Panc1 (cell line): ENCODE measurements at regions of chr15 and their contacts with region 1.

Region 1: GRCh38 chr15:59917504-59918157 is 86.5 kb upstream of the FOXB1 start:
- DNase-seq: peak; percentile 25
- ATAC-seq: peak; percentile 99
- H3K4me3 ChIP-seq: no peak overlapping the region
- H3K27ac ChIP-seq: no peak overlapping the region
- H3K4me1 ChIP-seq: no peaks in the 10 kb centered on the region
- H3K27me3 ChIP-seq: no peaks in the 10 kb centered on the region
- CTCF ChIP-seq: peak; percentile 78

Region 2: DNA sequence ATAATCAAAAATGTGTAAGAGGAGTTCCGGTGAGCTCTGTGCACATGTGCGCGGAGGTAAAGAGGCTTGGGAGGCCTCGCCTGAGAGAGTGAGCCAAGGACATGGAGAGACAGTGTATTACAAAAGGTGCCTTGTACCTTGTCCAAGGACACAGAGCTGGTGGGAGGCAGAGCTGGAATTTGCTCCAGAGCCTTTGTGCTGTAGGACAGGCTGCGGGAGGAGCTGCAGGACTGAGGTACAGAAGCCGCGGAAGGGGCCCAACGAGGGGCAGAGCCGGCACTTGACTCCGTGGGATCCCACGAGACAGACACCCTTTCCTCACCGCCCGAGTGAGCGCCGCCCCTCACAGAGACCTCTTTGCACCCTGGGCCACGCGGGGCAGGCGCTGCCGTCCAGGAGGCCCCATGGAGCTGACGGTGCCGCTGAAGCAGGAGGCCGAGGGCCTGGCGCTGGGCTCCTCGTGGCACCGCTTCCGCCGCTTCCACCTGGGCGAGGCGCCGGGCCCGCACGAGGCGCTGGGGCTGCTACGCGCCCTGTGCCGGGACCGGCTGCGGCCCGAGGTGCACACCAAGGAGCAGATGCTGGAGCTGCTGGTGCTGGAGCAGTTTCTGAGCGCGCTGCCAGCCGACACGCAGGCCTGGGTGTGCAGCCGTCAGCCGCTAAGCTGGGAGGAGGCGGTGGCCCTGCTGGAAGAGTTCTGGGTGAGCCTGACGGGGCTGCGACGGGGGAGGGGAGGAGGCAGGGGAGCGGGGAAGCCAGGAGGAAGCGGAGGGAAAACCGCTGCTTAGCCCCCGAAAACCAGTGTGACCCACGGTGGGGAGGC is 1052.8 kb before region 1 on chr15:
- CTCF ChIA-PET with region 1: no interaction called
- POLR2A ChIA-PET with region 1: no interaction called
- in situ Hi-C with region 1: no loop called
- intact Hi-C with region 1: no loop called
- DNase-seq: no peak
- ATAC-seq: 0 out of 2 replicates have a peak, but pooled peaks have one; percentile 44
- H3K4me3 ChIP-seq: no peak overlapping the region
- H3K27ac ChIP-seq: no peak overlapping the region
- H3K4me1 ChIP-seq: no peaks in the 10 kb centered on the region
- H3K27me3 ChIP-seq: no peaks in the 10 kb centered on the region
- CTCF ChIP-seq: no peak

Region 3: DNA sequence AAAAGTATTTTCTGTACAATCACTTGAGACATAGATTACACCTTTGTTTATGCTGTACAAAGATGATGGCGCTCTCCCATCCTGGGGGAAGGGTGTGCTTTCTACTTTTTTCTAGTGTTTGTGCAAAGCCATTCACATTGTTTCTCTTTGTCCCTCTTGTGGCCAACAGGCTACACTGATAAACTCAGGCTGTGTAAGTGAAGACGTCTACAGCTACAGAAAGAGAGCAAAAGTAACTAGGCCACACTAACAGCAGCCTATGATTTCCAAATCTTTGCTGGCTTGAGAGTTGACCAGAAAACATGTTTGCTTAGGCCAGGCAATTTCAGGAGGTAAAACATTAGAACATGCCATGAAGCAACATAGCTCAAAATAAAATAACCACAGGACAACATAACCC is 161.6 kb after region 1 on chr15:
- CTCF ChIA-PET with region 1: interaction called, 3 read pairs
- POLR2A ChIA-PET with region 1: no interaction called
- in situ Hi-C with region 1: no loop called
- intact Hi-C with region 1: loop called (anchors 10 kb)
- DNase-seq: no peak
- ATAC-seq: peak; percentile 87; the same call in 1 of the 2 replicates
- H3K4me3 ChIP-seq: no peak overlapping the region
- H3K27ac ChIP-seq: no peak overlapping the region
- H3K4me1 ChIP-seq: peaks cover 3% of the 10 kb centered on the region; the same call in 1 of the 2 replicates
- H3K27me3 ChIP-seq: no peaks in the 10 kb centered on the region
- CTCF ChIP-seq: peak; percentile 61

Region 4: DNA sequence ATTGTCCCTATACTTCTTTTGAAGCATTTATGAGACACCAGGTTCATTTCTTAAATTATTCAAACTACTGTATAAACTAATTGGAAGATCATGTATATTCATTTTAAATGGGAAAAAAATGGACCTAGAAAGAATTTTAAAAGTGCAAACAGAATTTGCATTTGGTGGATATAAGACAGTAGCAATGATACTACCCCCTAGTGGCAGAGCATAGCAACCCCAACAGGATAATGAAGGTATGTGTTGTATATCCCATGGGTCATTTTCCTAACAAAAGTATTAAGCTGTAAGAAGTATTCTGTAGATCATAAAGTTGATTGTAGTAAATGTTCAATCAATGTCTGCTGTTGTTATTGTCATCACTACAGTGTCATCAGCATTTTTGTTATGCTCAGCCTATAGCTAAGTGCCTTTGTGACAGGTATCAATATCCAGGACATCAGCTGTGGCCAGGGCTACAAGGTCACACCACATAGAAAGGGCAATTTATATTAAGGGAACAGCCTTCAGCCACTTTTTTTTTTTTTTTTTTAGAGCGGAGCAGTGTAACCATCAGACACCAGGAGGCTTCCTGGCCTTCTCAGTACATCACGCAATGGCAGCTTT is 262.3 kb after region 1 on chr15:
- CTCF ChIA-PET with region 1: no interaction called
- POLR2A ChIA-PET with region 1: no interaction called
- in situ Hi-C with region 1: no loop called
- intact Hi-C with region 1: loop called (anchors 2 kb)
- DNase-seq: peak; percentile 20
- ATAC-seq: peak; percentile 89
- H3K4me3 ChIP-seq: no peak overlapping the region
- H3K27ac ChIP-seq: no peak overlapping the region
- H3K4me1 ChIP-seq: no peaks in the 10 kb centered on the region
- H3K27me3 ChIP-seq: no peaks in the 10 kb centered on the region
- CTCF ChIP-seq: peak; percentile 83